H1 (cell line): ENCODE measurements at regions of chr6 and their contacts with region 1.

Region 1: DNA sequence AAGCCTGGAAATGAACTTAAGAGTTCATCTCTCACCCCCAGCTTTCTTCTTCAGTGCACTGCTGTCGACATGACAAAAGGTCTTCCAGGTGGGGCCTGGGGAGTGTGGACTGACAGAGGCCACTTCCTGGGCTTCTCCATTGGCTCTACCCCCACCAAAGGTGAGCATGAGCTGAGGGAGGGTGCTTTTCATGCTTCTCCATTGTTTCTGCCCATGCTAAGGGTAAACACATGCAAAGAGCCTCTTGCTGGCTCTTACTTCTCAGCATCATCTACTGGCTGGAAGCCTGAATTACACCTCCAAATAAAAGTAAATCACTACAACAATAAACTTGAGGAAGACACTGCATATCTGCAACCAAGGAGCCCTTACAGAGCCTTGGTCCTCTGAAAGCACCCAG is 227.2 kb downstream of the EPM2A start:
- DNase-seq: peak in 1 of 2 experiments; percentile 52
- H3K4me3 ChIP-seq: no peak overlapping the region
- H3K27ac ChIP-seq: no peak overlapping the region
- H3K4me1 ChIP-seq: peaks cover 0 to 4% (median 2%) of the 10 kb centered on the region in 4 experiments; a peak in 3 of 7 replicates
- H3K27me3 ChIP-seq: no peaks in the 10 kb centered on the region
- CTCF ChIP-seq: peak in 2 of 3 experiments; percentile 54 to 80; a peak in 2 of 4 replicates
- EP300 ChIP-seq: no peak
- POLR2A ChIP-seq: no peak
- RAD21 ChIP-seq: peak; percentile 76 to 77

Region 2: DNA sequence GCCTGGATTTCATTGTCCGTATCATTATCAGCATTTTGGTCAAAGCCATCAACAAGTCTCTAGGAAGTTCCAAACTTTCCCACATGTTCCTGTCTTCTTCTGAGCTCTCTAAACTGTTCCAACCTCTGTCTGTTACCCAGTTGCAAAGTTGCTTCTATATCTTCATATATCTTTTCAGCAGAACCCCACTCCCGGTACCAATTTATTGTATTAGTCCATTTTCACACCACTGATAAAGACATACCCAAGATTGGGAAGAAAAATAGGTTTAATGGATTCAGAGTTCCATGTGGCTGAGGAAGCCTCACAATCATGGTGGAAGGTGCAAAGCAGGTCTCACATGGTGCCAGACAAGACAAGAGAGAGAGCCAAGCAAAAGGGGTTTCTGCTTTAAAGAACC is 66.0 kb before region 1 on chr6:
- CTCF ChIA-PET with region 1: no interaction called
- POLR2A ChIA-PET with region 1: no interaction called
- DNase-seq: no peak
- H3K4me3 ChIP-seq: no peak overlapping the region
- H3K27ac ChIP-seq: no peak overlapping the region
- H3K4me1 ChIP-seq: no peaks in the 10 kb centered on the region
- H3K27me3 ChIP-seq: no peaks in the 10 kb centered on the region
- CTCF ChIP-seq: no peak
- EP300 ChIP-seq: no peak
- POLR2A ChIP-seq: no peak
- RAD21 ChIP-seq: no peak

Region 3: DNA sequence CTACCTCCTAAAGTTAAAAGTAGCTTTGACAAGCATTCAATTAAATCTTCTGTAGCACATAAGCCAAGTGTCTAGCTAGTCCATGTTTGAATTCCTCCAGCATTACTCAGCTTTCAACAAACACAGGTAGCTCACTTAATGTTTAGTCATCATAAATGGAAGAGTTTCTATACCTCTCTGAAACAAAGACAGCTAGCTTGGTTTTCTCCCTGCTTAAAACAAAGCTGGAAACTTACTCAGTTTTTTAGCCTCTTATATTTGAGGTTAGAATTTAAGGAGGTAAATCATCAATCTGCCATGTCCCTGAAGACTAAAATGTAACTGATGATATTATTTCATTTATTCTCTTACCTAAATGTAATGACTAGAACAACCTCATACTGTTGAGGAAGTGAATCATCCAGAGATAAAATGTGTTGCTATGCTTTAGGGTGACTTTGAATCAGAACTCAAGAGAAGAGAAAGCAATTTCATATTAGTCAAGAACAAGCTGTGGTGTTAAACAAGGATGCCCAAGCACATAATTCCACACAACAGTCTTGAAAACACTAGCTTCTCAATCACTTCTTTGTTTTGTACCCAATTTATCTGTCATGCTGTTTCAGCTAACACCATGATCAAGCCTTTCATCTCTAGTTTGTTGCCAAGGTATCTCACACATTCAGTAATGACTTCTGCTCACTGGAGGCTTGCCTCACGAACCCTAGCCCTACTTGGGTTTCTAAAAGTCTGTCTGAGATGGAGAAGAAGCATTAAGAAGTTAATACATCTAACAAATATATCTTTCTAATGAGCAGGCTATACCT is 24.7 kb before region 1 on chr6:
- CTCF ChIA-PET with region 1: interaction called, 10 read pairs
- POLR2A ChIA-PET with region 1: no interaction called
- DNase-seq: no peak
- H3K4me3 ChIP-seq: no peak overlapping the region
- H3K27ac ChIP-seq: no peak overlapping the region
- H3K4me1 ChIP-seq: no peaks in the 10 kb centered on the region
- H3K27me3 ChIP-seq: no peaks in the 10 kb centered on the region
- CTCF ChIP-seq: no peak
- EP300 ChIP-seq: no peak
- POLR2A ChIP-seq: no peak
- RAD21 ChIP-seq: no peak